CD14-positive monocyte (primary cell): ENCODE measurements at regions of chr15 and their contacts with region 1.

Region 1: GRCh38 chr15:39580117-39580484 is 778 bp upstream of the THBS1 start:
- DNase-seq: peak; percentile 85 to 87 (median 86)
- H3K4me3 ChIP-seq: peak overlapping the region; percentile 47 to 76 (median 51)
- H3K4me3 Mint-ChIP-seq: peak overlapping the region; percentile 98
- H3K27ac ChIP-seq: peak overlapping the region in 1 of 2 donors; percentile 79
- H3K27ac Mint-ChIP-seq: peak overlapping the region in 6 of 7 donors; percentile 60 to 92 (median 86)
- H3K4me1 ChIP-seq: peaks cover 24 to 39% of the 10 kb centered on the region in 2 donors
- H3K4me1 Mint-ChIP-seq: peaks cover 42% of the 10 kb centered on the region
- H3K27me3 ChIP-seq: peaks cover 5 to 35% of the 10 kb centered on the region in 2 donors
- H3K27me3 Mint-ChIP-seq: peaks cover 19 to 61% (median 44%) of the 10 kb centered on the region in 3 donors
- CTCF ChIP-seq: peak; percentile 99

Region 2: DNA sequence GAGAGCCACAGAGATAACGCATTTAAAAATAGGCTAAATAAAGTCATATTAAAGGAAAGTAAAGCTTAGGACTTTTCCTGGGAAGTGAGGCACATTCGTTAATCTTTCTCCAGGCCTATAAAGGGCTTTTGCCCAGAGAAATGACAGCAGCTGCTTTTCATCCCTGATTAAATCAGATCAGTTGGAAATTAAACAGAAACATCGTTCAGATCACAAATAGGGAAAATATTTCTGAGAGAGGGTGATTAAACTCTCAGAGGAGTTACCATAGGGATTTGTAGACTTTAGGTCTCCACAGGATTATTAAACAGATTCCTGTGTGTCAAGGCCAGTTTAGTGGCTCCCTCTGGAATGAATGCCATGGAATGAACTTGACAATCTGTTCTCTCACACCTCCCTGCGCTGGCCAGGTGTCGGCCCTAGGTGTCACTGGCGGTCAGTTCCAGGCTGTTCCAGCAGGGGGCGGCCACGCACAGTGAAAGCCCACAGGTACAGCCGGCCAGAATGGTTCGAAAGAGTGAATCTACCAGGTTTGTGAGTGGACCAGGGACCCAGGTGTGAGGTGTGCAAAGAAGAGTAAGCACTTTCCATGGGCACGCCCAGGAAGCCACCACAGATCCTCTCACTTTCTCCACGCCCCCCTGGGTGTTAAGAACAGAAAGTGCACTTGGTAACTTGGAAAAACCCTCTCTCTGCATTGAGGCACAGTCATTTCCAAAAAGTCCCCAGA is 762.5 kb before region 1 on chr15:
- intact Hi-C with region 1: loop called in 1 of 2 experiments (anchors 5 kb)
- DNase-seq: peak; percentile 34 to 46 (median 44)
- H3K4me3 ChIP-seq: no peak overlapping the region
- H3K4me3 Mint-ChIP-seq: no peak overlapping the region
- H3K27ac ChIP-seq: no peak overlapping the region
- H3K27ac Mint-ChIP-seq: no peak overlapping the region
- H3K4me1 ChIP-seq: no peaks in the 10 kb centered on the region
- H3K4me1 Mint-ChIP-seq: peaks cover 3% of the 10 kb centered on the region
- H3K27me3 ChIP-seq: no peaks in the 10 kb centered on the region
- H3K27me3 Mint-ChIP-seq: peaks cover 0 to 8% (median 3%) of the 10 kb centered on the region in 3 donors
- CTCF ChIP-seq: peak; percentile 99

Region 3: GRCh38 chr15:39171944-39172368 is 408.1 kb before region 1 on chr15:
- intact Hi-C with region 1: loop called (anchors 5 to 10 kb)
- DNase-seq: peak; percentile 76 to 84 (median 77)
- H3K4me3 ChIP-seq: no peak overlapping the region
- H3K4me3 Mint-ChIP-seq: no peak overlapping the region
- H3K27ac ChIP-seq: no peak overlapping the region
- H3K27ac Mint-ChIP-seq: peak overlapping the region in 1 of 7 donors; percentile 75
- H3K4me1 ChIP-seq: peaks cover 0 to 14% of the 10 kb centered on the region in 2 donors
- H3K4me1 Mint-ChIP-seq: peaks cover 11% of the 10 kb centered on the region
- H3K27me3 ChIP-seq: peaks cover 0 to 9% of the 10 kb centered on the region in 2 donors
- H3K27me3 Mint-ChIP-seq: peaks cover 2 to 11% (median 10%) of the 10 kb centered on the region in 3 donors
- CTCF ChIP-seq: peak; percentile 42

Region 4: DNA sequence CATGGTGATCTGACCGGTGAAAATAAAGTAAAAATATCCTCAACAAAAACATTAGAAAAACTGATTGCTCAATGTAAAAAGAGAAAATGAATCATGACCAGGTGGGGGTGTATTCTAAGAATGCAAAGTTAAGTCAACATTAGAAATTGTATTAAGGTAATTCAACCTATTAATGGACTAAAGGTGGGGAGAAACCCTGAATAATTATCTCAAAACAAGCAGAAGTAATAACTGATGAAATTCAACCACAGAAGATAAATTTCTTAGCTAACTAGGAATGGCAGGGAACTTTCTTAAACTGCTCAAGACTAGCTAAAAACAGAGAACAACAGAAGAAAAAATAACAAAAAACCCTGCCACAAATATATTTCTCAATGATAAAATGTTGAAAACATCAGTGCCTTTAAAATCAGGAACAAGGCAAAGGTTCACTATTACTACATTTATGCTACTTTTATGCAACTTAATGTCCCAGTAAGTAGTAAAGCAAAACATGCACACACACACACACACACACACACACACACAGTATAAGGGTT is 203.7 kb before region 1 on chr15:
- intact Hi-C with region 1: loop called in 1 of 2 experiments (anchors 5 kb)
- DNase-seq: peak; percentile 80 to 95 (median 82)
- H3K4me3 ChIP-seq: no peak overlapping the region
- H3K4me3 Mint-ChIP-seq: peak overlapping the region in 1 of 2 donors; percentile 13
- H3K27ac ChIP-seq: peak overlapping the region; percentile 87 to 88
- H3K27ac Mint-ChIP-seq: peak overlapping the region; percentile 89 to 97 (median 93)
- H3K4me1 ChIP-seq: peaks cover 34 to 71% of the 10 kb centered on the region in 2 donors
- H3K4me1 Mint-ChIP-seq: peaks cover 60% of the 10 kb centered on the region
- H3K27me3 ChIP-seq: no peaks in the 10 kb centered on the region
- H3K27me3 Mint-ChIP-seq: peaks cover 0 to 5% (median 2%) of the 10 kb centered on the region in 3 donors
- CTCF ChIP-seq: no peak

Region 5: DNA sequence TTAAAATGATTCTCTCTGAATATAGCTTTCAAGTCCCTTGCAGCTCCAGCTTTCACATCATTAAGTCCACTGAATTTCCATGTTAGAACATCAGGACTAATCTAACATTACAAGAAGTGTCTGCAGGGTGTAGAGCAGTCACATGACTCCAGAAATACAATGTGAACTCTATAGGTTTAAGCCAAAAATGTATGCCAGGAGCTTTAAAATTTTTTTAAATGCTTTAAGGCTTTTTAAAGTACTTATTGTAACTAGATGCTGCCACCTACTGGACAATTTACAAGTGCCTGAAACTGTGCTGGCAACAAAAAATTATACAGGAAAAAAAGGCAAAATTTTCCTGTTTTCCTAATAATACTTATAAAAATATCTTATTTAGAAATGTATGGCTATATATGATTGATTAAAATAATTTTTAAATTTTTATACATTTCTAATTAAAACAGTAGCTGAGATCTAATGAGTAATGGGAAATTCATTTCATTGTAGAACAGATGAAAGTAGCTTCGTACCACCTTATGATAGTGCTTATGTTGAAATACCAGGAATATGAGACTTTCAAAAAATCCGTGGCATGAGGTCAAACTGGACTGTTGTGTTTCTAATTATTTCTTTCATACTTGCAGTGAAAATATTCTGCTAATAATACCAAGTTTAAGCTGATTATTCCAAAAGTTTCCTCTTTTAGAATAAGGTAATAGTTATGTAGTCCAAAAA is 176.9 kb after region 1 on chr15:
- intact Hi-C with region 1: loop called in 1 of 2 experiments (anchors 10 kb)
- DNase-seq: peak; percentile 22 to 62 (median 44)
- H3K4me3 ChIP-seq: no peak overlapping the region
- H3K4me3 Mint-ChIP-seq: no peak overlapping the region
- H3K27ac ChIP-seq: no peak overlapping the region
- H3K27ac Mint-ChIP-seq: no peak overlapping the region
- H3K4me1 ChIP-seq: no peaks in the 10 kb centered on the region
- H3K4me1 Mint-ChIP-seq: no peaks in the 10 kb centered on the region
- H3K27me3 ChIP-seq: no peaks in the 10 kb centered on the region
- H3K27me3 Mint-ChIP-seq: peaks cover 0 to 3% (median 0%) of the 10 kb centered on the region in 3 donors
- CTCF ChIP-seq: peak; percentile 85